ENCODE measurements at regions of chr11 and their contacts with region 1.

Region 1: DNA sequence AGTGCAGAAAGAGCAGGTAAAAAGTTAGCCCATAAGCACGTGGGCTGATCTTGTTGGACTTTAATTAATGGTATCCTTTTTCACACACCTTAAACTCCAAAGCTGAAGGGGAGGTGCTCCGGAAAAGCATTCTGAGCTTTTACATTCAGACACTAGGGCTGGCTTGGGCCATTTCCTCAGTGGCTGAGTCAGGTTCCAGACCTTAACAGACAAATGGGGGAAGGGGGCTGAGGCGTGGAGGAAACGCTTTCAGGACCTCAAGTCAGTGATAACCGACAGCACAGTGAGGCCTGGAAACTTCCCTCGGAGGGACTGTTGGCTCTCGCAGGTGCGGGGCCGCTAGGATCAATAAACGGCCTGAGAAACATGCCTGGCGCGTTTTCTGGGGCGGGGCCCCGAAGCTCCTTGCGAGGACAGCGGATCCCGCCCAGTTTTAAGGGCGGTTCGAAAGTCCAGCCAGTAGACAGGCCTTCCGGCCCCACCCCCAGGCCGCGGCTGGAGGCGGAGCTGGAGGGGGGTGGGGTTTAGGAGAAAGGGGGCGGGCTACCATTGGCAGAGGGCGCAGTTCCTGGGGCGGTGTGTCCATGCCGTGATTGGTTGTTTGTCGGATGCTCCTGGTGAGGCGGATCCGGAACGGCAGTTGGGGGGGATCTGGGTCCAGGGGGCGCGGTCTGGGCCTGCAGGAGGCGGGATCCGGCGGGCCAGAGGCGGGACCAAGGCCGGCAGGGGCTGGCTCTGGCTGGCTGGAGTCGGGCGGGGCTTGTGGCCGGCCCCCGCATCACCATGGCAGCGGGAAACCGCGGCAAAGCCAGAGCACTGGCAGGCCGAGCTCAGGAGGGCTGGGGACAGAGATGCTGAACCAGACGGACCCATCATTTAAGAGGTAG is 8.0 kb downstream of the C11orf52 start:
- DNase-seq: peak; percentile 96 to 97
- ATAC-seq: peak; percentile 95 to 97 (median 96)
- H3K4me3 ChIP-seq: peak overlapping the region in 9 of 10 donors; percentile 22 to 58 (median 52)
- H3K27ac ChIP-seq: peak overlapping the region; percentile 39 to 94 (median 86)
- H3K4me1 ChIP-seq: peaks cover 5 to 54% (median 40%) of the 10 kb centered on the region in 9 donors
- H3K27me3 ChIP-seq: no peaks in the 10 kb centered on the region
- CTCF ChIP-seq: peak in 1 of 9 donors; percentile 5

Region 2: DNA sequence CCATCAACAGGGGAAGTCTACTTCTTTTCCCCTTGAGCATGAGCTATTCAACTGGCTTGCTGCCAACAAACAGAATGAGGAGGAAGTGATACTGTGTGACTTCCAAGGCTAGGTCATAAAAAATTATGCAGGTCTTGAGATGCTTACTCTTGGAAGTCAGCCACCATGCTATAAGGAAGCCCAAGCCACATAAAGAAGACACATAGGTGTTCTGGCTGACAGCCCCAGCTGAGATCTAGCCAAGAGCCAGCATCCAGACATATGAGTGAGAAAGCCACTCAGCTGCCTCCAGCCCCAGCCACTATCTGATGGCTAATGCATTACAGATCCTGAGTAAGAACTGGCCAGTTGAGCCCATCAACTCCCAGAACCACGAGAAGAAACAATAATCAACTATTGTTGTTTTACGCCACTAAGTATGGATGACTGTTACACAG is 129.6 kb before region 1 on chr11:
- intact Hi-C with region 1: no loop called
- DNase-seq: no peak
- ATAC-seq: peak in 1 of 8 donors; percentile 21
- H3K4me3 ChIP-seq: no peak overlapping the region
- H3K27ac ChIP-seq: peak overlapping the region in 1 of 10 donors; percentile 24
- H3K4me1 ChIP-seq: peaks cover 0 to 15% (median 6%) of the 10 kb centered on the region in 9 donors
- H3K27me3 ChIP-seq: no peaks in the 10 kb centered on the region
- CTCF ChIP-seq: no peak

Region 3: DNA sequence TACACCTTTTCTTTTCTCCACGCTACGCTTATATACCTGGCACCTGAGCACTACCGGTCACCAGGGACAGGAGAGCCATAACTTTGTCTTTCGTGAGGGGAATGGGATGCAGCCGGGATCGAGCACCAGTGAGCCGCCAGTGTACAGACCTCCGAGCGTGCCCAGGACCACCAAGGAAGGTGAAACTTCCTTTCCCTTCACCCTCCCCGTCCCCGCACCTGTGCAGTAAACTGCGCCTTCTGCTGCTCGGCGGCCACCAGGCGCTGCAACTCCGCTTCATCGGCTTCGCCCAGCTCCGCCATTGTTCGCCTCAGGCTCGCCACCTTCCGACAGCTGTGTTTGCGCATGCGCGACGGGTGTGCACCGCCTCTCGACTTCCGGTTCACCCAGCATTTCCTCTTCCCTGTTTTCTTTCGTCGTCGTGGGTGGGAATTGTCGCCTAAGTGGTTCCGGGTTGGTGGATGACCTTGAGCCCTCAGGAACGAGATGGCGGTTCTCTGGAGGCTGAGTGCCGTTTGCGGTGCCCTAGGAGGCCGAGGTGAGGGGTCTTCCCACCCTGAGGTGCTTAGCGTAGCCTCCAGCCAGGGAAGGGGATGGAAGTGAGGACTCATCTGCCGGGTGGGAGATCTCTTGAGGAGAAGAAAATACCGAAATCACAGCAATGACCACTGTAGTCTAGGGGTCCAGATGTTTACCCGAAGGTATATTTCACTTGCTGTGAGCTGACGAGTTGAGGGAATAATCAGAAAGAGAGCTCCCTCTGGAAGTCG is 159.9 kb after region 1 on chr11 and contains the starts of genes SDHD and TIMM8B:
- intact Hi-C with region 1: loop called in 5 of 10 experiments (anchors 5 to 10 kb)
- DNase-seq: peak; percentile 95 to 97
- ATAC-seq: peak; percentile 92 to 98 (median 96)
- H3K4me3 ChIP-seq: peak within 1 kb of the TSS; percentile 71 to 94 (median 84)
- H3K27ac ChIP-seq: peak within 1 kb of the TSS; percentile 69 to 95 (median 88)
- H3K4me1 ChIP-seq: peaks cover 3 to 68% (median 36%) of the 10 kb centered on the region in 9 donors
- H3K27me3 ChIP-seq: no peaks in the 10 kb centered on the region
- CTCF ChIP-seq: peak in 5 of 9 donors; percentile 18 to 50 (median 46)
- total RNA-seq, gene SDHD: 205 to 330 (median 279) TPM
- total RNA-seq, gene TIMM8B: 142 to 194 (median 168) TPM

Region 4: GRCh38 chr11:113363406-113363805 is 1436.7 kb after region 1 on chr11:
- intact Hi-C with region 1: no loop called
- DNase-seq: no peak
- ATAC-seq: no peak
- H3K4me3 ChIP-seq: no peak overlapping the region
- H3K27ac ChIP-seq: no peak overlapping the region
- H3K4me1 ChIP-seq: no peaks in the 10 kb centered on the region
- H3K27me3 ChIP-seq: no peaks in the 10 kb centered on the region
- CTCF ChIP-seq: no peak

Measured in heart right ventricle (tissue), 16 donors.